T-cell (primary cell): ENCODE measurements at regions of chr6 and their contacts with region 1.

Region 1: DNA sequence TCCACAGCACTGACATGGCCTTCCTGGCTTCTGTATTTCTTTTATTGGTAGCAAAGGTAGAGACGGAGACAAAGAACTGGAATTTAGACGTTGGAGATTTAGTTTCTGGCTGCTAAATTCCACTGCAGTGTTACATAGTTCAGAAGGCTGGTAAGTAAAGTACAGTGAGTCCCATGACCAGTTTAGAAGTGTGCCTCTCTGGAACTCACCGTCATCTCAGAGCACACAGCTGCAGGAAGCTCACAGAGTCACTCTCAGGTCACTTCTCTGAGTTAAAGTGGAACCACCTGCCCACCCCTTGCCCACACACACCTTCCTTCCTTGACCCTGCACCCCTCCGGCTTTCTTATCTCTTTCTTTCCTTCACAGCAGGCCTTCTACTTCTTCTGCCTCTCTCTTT is 19.6 kb upstream of the BMP6 start:
- DNase-seq: no peak
- ATAC-seq: no peak
- H3K4me3 ChIP-seq: no peak overlapping the region
- H3K4me3 Mint-ChIP-seq: no peak overlapping the region
- H3K27ac ChIP-seq: no peak overlapping the region
- H3K27ac Mint-ChIP-seq: no peak overlapping the region
- H3K4me1 ChIP-seq: no peaks in the 10 kb centered on the region
- H3K4me1 Mint-ChIP-seq: no peaks in the 10 kb centered on the region
- H3K27me3 ChIP-seq: peaks cover 0 to 12% of the 10 kb centered on the region in 2 experiments
- H3K27me3 Mint-ChIP-seq: peaks cover 0 to 4% of the 10 kb centered on the region in 2 donors

Region 2: GRCh38 chr6:7693827-7694226 is 12.4 kb before region 1 on chr6:
- CTCF ChIA-PET with region 1: interaction called, 3 to 14 read pairs
- POLR2A ChIA-PET with region 1: no interaction called
- DNase-seq: no peak
- ATAC-seq: no peak
- H3K4me3 ChIP-seq: no peak overlapping the region
- H3K4me3 Mint-ChIP-seq: no peak overlapping the region
- H3K27ac ChIP-seq: no peak overlapping the region
- H3K27ac Mint-ChIP-seq: no peak overlapping the region
- H3K4me1 ChIP-seq: no peaks in the 10 kb centered on the region
- H3K4me1 Mint-ChIP-seq: peaks cover 0 to 3% (median 0%) of the 10 kb centered on the region in 3 donors
- H3K27me3 ChIP-seq: peaks cover 0 to 17% of the 10 kb centered on the region in 2 experiments
- H3K27me3 Mint-ChIP-seq: peaks cover 13 to 21% of the 10 kb centered on the region in 2 donors